Activated T-helper 2 cell treated with anti-CD3 and anti-CD28 coated beads, Interferon-gamma antibody, Interleukin-2, Interleukin-4, amounts not matched to agents 10 μg/mL and 5 μg/mL and 100 μg/mL, durations not matched to agents 14 hours and 24 hours and 36 hours (primary cell): ENCODE measurements at regions of chr16 and their contacts with region 1.

Region 1: GRCh38 chr16:67841764-67842508 is at the start of gene THAP11:
- DNase-seq: peak; percentile 92
- H3K4me3 Mint-ChIP-seq: peak within 1 kb of the TSS; percentile 89
- H3K27ac Mint-ChIP-seq: peak within 1 kb of the TSS; percentile 94
- H3K4me1 Mint-ChIP-seq: peaks cover 29% of the 10 kb centered on the region
- H3K27me3 Mint-ChIP-seq: no peaks in the 10 kb centered on the region
- total RNA-seq, gene THAP11: 43.0 and 45.1 TPM in 2 replicates

Region 2: DNA sequence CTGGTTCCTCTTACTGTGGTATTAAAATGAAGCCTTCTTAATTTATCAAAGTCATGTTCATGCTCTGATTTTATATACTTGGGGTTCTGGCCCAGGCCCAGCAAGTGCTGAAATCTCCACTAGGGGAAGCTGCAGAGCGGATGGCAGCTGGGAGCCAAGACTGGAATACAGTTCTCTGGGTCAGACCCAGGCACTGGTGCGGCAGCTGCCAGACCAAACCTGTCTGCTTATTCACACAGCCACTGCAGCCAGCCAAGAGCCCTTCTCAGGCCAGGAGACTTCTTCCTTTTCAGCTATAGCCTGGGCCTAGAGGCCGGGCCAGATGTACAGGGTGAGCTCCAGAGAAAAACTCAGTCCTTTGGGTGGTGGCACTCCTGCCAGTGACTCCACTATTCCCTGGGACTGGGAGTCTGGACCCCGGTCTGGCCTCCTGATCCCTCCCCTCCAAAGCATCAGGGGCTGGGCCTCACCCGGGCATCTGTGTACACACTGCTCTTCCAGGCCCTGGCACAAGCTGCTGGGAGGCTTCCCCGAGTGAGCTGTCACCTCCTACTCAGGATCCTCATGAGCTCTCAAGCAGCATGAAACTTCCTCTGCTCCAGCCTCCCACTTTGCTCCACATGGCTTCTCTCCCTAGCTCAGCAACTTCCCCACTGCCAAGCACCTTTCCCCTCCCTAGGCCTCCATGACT is 385.4 kb before region 1 on chr16:
- intact Hi-C with region 1: no loop called
- DNase-seq: no peak
- H3K4me3 Mint-ChIP-seq: no peak overlapping the region
- H3K27ac Mint-ChIP-seq: peak overlapping the region; percentile 6
- H3K4me1 Mint-ChIP-seq: no peaks in the 10 kb centered on the region
- H3K27me3 Mint-ChIP-seq: no peaks in the 10 kb centered on the region

Region 3: DNA sequence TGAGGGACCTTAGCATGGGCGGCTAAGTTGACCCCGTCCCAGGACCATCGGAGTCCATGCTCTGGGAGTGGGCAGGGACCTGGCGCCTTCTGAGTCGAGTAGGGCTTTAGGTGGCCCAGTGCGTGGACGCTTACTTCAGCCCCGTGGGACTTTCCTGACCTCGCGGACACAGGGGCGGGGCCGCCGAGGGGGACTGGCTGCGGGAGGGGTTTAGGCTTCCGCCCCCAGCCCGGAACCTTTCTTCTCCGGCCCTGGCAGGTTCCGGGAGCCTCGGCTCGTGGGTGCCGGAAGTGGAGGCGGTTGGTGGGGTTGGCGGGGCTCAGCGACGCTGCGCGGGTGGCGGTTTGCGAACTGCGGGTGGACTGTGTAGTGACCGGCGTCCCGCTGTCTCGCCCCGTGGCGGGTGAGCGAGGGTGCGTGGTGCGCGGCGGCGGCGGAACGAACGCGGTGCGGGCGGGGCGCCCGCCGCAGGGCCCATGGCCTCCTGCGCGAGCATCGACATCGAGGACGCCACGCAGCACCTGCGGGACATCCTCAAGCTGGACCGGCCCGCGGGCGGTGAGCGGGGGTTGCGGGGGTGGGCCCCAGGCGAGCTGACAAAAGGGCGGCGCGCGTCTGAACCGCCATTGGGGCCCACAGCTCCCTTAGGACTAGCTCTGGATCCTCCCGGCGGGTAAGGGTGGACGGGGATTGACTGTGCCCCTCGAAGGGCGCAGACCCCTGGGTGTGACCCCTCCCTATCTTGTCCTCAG is 31.0 kb after region 1 on chr16 and contains the start of gene EDC4:
- intact Hi-C with region 1: loop called (anchors 1 kb)
- DNase-seq: peak; percentile 85
- H3K4me3 Mint-ChIP-seq: peak within 1 kb of the TSS; percentile 83
- H3K27ac Mint-ChIP-seq: peak within 1 kb of the TSS; percentile 89
- H3K4me1 Mint-ChIP-seq: peaks cover 21% of the 10 kb centered on the region
- H3K27me3 Mint-ChIP-seq: no peaks in the 10 kb centered on the region
- total RNA-seq, gene EDC4: 102 and 105 TPM in 2 replicates